ENCODE measurements at regions of chr10 and their contacts with region 1.

Region 1: GRCh38 chr10:102352066-102352715 is 43.3 kb upstream of the NFKB2 start:
- DNase-seq: peak; percentile 72
- CTCF ChIP-seq: peak; percentile 89

Region 2: DNA sequence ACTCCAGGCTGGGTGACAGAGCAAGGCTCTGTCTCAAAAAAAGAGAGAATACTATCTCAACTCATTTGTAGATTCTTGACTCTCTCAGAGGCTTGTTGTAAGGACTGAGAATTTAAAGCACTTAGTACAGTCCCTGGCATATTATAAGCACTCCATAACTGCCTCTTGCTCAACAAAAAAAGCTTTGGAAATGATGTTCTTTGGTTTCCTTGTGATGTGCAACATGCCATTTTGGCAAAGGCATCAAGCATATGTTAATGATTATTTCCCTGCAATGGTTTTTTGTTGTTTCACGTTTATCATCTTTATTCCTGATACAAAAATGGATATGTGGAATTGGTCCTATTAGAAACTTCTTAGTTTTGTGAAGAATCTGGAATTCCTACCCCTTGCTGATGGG is 184.3 kb before region 1 on chr10:
- CTCF ChIA-PET with region 1: interaction called, 17 read pairs
- POLR2A ChIA-PET with region 1: no interaction called
- DNase-seq: no peak
- CTCF ChIP-seq: no peak

Region 3: DNA sequence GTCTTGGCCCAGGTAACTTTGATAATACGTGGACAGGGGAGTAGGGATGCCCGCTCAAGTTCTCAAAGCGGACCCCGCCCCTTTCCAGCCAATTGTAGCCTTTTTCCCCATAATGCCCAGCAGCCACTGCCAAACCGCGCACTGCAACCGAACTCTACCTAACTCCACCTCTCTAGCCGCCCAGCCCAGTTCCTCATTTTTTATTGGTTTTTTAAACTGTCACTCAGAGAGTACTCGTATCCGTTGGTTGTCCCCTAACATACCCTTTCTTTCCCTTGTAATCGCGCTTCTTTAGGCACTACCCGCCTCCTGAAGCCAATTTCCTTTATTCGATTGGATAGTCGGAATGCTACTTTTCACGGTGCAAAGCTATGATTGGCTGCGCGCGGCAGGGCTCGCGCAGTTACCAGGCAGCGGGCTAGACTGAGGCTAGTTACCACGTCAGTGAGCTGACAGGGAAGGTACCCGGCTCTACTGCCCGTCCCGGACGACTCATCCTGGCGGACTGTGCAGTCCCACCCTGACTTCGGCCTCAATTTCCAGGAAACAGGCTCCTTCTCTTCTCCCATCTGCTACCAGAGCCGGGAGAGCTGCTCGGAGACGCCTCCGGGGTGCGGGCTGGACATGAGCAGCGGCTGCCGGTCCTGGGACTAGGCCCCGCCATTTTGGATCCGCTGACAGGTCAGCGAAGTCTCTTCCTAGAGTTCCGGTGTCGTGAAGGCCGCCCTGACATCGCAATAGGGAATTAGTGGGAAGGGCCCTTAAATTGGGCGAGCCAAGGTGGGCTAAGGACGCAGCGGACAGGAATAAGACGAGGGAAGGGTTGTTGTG is 106.9 kb before region 1 on chr10 and contains the start of gene GBF1:
- CTCF ChIA-PET with region 1: interaction called, 566 read pairs
- POLR2A ChIA-PET with region 1: no interaction called
- DNase-seq: peak; percentile 96
- CTCF ChIP-seq: no peak

Region 4: GRCh38 chr10:102283488-102283887 is 68.7 kb before region 1 on chr10:
- CTCF ChIA-PET with region 1: interaction called, 16 read pairs
- POLR2A ChIA-PET with region 1: no interaction called
- DNase-seq: no peak
- CTCF ChIP-seq: no peak

Region 5: GRCh38 chr10:102322914-102323313 is 29.3 kb before region 1 on chr10:
- CTCF ChIA-PET with region 1: interaction called, 13 read pairs
- POLR2A ChIA-PET with region 1: no interaction called
- DNase-seq: no peak
- CTCF ChIP-seq: no peak

Region 6: DNA sequence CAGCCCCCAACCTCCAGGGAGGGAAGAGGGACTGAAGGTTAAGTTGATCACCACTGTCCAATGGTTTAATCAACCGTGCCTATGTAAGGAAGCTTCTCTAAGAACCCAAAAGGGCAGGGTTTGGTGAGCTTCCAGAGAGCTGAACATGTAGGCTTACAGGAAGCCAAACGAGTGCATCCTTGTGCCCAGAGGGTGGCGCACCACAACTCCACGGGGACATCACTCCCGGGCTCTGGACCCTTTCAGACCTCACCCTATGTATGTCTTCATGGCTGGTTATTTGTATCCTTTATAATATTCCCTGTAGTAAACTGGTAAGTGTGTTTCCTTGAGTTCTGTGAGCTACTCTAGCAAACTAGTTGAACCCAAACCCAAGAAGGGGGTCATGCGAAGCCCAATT is 31.9 kb after region 1 on chr10:
- CTCF ChIA-PET with region 1: interaction called, 15 read pairs
- POLR2A ChIA-PET with region 1: no interaction called
- DNase-seq: no peak
- CTCF ChIP-seq: no peak

Measured in GM10248 (cell line).